ENCODE measurements at regions of chr20 and their contacts with region 1.

Region 1: GRCh38 chr20:50987592-50988210 is 29.1 kb downstream of the MOCS3 start:
- H3K4me3 Mint-ChIP-seq: no peak overlapping the region
- H3K27ac Mint-ChIP-seq: no peak overlapping the region
- H3K4me1 Mint-ChIP-seq: peaks cover 7% of the 10 kb centered on the region
- H3K27me3 Mint-ChIP-seq: peaks cover 26% of the 10 kb centered on the region

Region 2: DNA sequence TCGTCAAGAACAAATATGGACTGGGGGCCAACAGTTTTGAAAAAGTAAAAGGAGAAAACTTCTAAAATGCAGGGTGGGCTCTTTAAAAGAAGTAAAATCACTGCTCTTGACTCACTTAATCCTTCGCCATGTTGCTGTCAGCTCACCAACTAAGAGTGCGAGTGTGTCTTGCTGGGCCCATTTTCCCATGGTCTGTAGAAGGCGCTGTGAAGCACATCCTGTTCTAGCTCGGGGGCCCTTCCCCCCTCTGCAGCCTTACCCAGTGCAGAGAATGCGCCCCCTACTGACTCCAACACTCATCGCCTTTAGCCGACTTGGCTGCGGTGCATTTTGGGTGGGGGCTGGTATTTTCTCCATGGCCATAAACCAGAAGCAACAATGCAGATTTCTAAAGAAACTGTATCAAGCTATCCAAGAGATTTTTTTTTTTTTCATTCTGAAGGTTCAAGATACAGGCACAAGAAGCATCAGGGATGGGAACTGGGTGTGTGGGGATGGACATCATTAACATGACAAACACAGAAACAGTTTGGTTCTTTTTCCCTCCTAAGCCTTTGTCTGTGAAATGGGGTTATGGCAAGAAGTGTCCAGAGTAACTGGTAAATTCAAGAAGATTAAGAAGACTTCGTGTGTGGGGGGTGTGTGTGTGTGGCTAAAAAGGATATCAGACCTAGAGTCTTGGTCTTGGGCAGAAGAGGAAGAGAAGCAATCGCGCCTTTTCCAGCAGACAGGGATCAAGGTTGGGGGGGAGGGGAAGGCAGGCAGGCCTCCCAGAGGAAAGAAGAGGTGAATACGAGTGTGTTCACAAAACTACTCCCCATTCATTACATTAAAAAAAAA is 58.2 kb before region 1 on chr20:
- intact Hi-C with region 1: no loop called
- H3K4me3 Mint-ChIP-seq: peak overlapping the region; percentile 95
- H3K27ac Mint-ChIP-seq: peak overlapping the region; percentile 96
- H3K4me1 Mint-ChIP-seq: peaks cover 50% of the 10 kb centered on the region
- H3K27me3 Mint-ChIP-seq: no peaks in the 10 kb centered on the region

Region 3: GRCh38 chr20:51326201-51326819 is 338.6 kb after region 1 on chr20:
- intact Hi-C with region 1: loop called (anchors 5 kb)
- H3K4me3 Mint-ChIP-seq: no peak overlapping the region
- H3K27ac Mint-ChIP-seq: no peak overlapping the region
- H3K4me1 Mint-ChIP-seq: no peaks in the 10 kb centered on the region
- H3K27me3 Mint-ChIP-seq: peaks cover 2% of the 10 kb centered on the region

Region 4: GRCh38 chr20:51595058-51595532 is 607.4 kb after region 1 on chr20:
- intact Hi-C with region 1: loop called (anchors 10 kb)
- H3K4me3 Mint-ChIP-seq: peak overlapping the region; percentile 2
- H3K27ac Mint-ChIP-seq: no peak overlapping the region
- H3K4me1 Mint-ChIP-seq: peaks cover 10% of the 10 kb centered on the region
- H3K27me3 Mint-ChIP-seq: peaks cover 9% of the 10 kb centered on the region